ENCODE measurements at regions of chr7 and their contacts with region 1.

Region 1: GRCh38 chr7:69782917-69783684 is 184.8 kb downstream of the AUTS2 start:
- DNase-seq: no peak
- H3K4me3 ChIP-seq: no peak overlapping the region
- H3K27ac ChIP-seq: no peak overlapping the region
- H3K4me1 ChIP-seq: no peaks in the 10 kb centered on the region
- H3K27me3 ChIP-seq: no peaks in the 10 kb centered on the region
- CTCF ChIP-seq: no peak

Region 2: GRCh38 chr7:69651101-69651590 is 132.0 kb before region 1 on chr7:
- CTCF ChIA-PET with region 1: no interaction called
- dilution Hi-C with region 1: no loop called
- in situ Hi-C with region 1: no loop called
- intact Hi-C with region 1: loop called (anchors 10 kb)
- DNase-seq: no peak
- H3K4me3 ChIP-seq: no peak overlapping the region
- H3K27ac ChIP-seq: no peak overlapping the region
- H3K4me1 ChIP-seq: no peaks in the 10 kb centered on the region
- H3K27me3 ChIP-seq: no peaks in the 10 kb centered on the region
- CTCF ChIP-seq: no peak

Measured in mammary epithelial cell (primary cell).